ENCODE measurements at regions of chr18 and their contacts with region 1.

Region 1: GRCh38 chr18:23138471-23138870 is 3.2 kb downstream of the CABLES1 start:
- DNase-seq: peak; percentile 33 to 48
- ATAC-seq: peak in 7 of 8 donors; percentile 30 to 81 (median 67)
- H3K4me3 ChIP-seq: peak overlapping the region in 3 of 10 donors; percentile 63 to 68 (median 66)
- H3K27ac ChIP-seq: no peak overlapping the region
- H3K4me1 ChIP-seq: peaks cover 12 to 65% (median 52%) of the 10 kb centered on the region in 9 donors
- H3K27me3 ChIP-seq: peaks cover 0 to 57% (median 42%) of the 10 kb centered on the region in 7 donors
- CTCF ChIP-seq: no peak

Region 2: DNA sequence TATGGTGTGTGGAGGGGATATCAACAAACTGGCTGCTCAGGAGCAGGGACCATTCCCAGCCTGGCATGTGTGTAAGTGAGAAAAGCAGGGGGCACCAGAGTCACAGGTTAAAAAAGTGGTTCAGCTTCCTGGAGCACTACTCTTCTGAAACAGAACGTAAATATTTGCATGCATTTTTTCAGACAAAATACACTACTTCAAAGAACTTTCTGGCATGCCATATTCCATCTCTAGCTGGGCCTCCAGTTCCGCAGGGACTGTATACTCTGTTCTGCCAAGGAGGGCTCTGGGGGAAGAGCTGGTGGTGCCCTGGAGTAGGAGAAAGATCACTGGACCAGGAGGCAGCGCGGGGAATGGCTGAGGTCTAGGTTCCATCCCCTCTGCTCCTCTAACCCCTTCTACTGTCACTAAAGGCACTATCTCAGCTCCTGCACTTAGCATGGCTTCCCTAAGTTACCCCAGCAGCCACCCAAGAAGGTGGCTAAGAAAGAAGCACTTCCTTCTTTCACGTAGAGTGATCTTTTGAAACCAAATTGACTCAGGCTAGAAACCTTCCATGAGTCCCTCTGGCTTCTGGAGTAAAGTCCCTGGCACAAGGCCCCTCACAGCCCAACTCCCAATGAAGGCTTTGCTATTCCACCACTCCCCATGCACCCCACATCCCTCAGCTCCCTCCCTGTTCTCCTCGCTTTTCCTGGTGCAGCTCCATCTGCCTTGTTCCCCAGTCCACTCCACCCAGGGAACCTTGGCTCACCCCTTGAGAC is 60.8 kb before region 1 on chr18:
- intact Hi-C with region 1: no loop called
- DNase-seq: no peak
- ATAC-seq: peak in 2 of 8 donors; percentile 29 to 40
- H3K4me3 ChIP-seq: no peak overlapping the region
- H3K27ac ChIP-seq: peak overlapping the region in 1 of 10 donors; percentile 77
- H3K4me1 ChIP-seq: peaks cover 0 to 29% (median 0%) of the 10 kb centered on the region in 9 donors
- H3K27me3 ChIP-seq: peaks cover 0 to 14% (median 0%) of the 10 kb centered on the region in 7 donors
- CTCF ChIP-seq: no peak

Region 3: GRCh38 chr18:23207191-23207955 is 68.9 kb after region 1 on chr18:
- intact Hi-C with region 1: no loop called
- DNase-seq: no peak
- ATAC-seq: no peak
- H3K4me3 ChIP-seq: no peak overlapping the region
- H3K27ac ChIP-seq: no peak overlapping the region
- H3K4me1 ChIP-seq: no peaks in the 10 kb centered on the region
- H3K27me3 ChIP-seq: no peaks in the 10 kb centered on the region
- CTCF ChIP-seq: peak in 4 of 9 donors; percentile 7 to 18 (median 16)

Region 4: DNA sequence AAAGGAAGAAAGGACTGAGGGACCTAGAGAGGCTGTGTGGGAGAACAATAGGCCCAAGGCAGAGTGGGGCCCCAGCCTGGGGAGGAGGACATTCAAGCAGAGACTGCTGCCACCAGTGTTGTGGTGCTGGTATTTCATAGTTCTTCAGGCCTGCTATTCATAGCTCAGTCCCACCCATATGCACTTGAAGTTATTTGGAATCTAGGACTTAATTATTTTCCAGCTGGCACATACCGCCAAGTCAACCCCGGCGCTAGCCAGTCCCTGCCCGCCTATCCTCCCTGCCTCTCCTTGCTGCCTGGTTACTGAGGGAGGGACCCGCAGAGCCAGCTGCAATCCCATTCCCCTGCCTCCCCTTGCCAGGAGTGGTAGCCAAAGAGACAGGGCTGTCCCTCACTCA is 138.0 kb after region 1 on chr18:
- intact Hi-C with region 1: loop called in 3 of 10 experiments (anchors 1 to 10 kb)
- DNase-seq: peak; percentile 37 to 47
- ATAC-seq: peak; percentile 86 to 97 (median 93)
- H3K4me3 ChIP-seq: no peak overlapping the region
- H3K27ac ChIP-seq: peak overlapping the region in 7 of 10 donors; percentile 20 to 62 (median 52)
- H3K4me1 ChIP-seq: peaks cover 0 to 14% (median 3%) of the 10 kb centered on the region in 9 donors
- H3K27me3 ChIP-seq: no peaks in the 10 kb centered on the region
- CTCF ChIP-seq: peak in 3 of 9 donors; percentile 20 to 33 (median 29)